Caco-2 (cell line): ENCODE measurements at regions of chr10 and their contacts with region 1.

Region 1: GRCh38 chr10:93006435-93007039 is 54.1 kb upstream of the CYP26C1 start:
- DNase-seq: peak in 1 of 2 experiments; percentile 53
- H3K4me3 ChIP-seq: no peak overlapping the region
- H3K4me3 Mint-ChIP-seq: no peak overlapping the region
- H3K27ac Mint-ChIP-seq: no peak overlapping the region
- H3K4me1 ChIP-seq: no peaks in the 10 kb centered on the region
- H3K4me1 Mint-ChIP-seq: no peaks in the 10 kb centered on the region
- H3K27me3 ChIP-seq: no peaks in the 10 kb centered on the region
- H3K27me3 Mint-ChIP-seq: no peaks in the 10 kb centered on the region
- CTCF ChIP-seq: peak; percentile 64 to 72

Region 2: DNA sequence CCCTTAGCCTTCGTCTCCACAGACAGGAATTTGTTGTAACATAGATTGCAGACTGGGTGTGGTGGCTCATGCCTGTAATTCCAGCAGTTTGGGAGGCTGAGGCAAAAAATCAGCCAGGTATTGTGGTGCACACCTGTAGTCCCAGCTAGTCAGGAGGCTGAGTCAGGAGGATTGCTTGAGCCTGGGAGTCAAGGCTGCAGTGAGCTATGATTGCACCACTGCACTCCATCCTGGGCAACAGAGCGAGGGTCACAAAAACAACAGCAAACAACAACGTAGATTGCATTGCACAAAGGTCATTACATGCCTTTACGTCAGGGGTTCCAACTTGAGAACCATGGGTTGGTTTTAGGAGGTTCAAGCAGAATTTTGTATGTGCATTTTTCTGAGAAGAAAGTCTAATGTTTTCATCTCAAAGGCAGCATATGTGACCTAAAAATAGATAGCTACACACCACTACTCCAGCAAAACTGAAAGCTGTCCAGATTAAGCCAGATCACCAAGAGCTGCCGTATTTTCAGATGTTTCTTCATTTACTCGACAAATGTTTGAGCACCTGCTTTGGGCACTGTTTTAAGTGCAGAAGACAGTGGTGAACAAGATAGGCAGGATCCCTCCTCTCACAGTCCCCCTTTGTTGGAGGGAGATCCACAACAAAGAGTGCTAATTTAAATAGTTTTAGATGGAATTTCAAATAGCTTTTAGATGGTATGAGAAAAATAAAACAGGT is 25.7 kb after region 1 on chr10:
- CTCF ChIA-PET with region 1: interaction called, 11 read pairs
- POLR2A ChIA-PET with region 1: no interaction called
- intact Hi-C with region 1: no loop called
- DNase-seq: no peak
- H3K4me3 ChIP-seq: no peak overlapping the region
- H3K4me3 Mint-ChIP-seq: no peak overlapping the region
- H3K27ac Mint-ChIP-seq: no peak overlapping the region
- H3K4me1 ChIP-seq: peaks cover 11% of the 10 kb centered on the region; the same call in 1 of the 2 replicates
- H3K4me1 Mint-ChIP-seq: peaks cover 8% of the 10 kb centered on the region
- H3K27me3 ChIP-seq: no peaks in the 10 kb centered on the region
- H3K27me3 Mint-ChIP-seq: no peaks in the 10 kb centered on the region
- CTCF ChIP-seq: no peak

Region 3: GRCh38 chr10:93039721-93040120 is 33.2 kb after region 1 on chr10:
- CTCF ChIA-PET with region 1: interaction called, 6 read pairs
- POLR2A ChIA-PET with region 1: no interaction called
- intact Hi-C with region 1: loop called (anchors 1 kb)
- DNase-seq: peak in 1 of 2 experiments; percentile 45
- H3K4me3 ChIP-seq: no peak overlapping the region
- H3K4me3 Mint-ChIP-seq: no peak overlapping the region
- H3K27ac Mint-ChIP-seq: no peak overlapping the region
- H3K4me1 ChIP-seq: no peaks in the 10 kb centered on the region
- H3K4me1 Mint-ChIP-seq: no peaks in the 10 kb centered on the region
- H3K27me3 ChIP-seq: no peaks in the 10 kb centered on the region
- H3K27me3 Mint-ChIP-seq: no peaks in the 10 kb centered on the region
- CTCF ChIP-seq: peak; percentile 32 to 59

Region 4: DNA sequence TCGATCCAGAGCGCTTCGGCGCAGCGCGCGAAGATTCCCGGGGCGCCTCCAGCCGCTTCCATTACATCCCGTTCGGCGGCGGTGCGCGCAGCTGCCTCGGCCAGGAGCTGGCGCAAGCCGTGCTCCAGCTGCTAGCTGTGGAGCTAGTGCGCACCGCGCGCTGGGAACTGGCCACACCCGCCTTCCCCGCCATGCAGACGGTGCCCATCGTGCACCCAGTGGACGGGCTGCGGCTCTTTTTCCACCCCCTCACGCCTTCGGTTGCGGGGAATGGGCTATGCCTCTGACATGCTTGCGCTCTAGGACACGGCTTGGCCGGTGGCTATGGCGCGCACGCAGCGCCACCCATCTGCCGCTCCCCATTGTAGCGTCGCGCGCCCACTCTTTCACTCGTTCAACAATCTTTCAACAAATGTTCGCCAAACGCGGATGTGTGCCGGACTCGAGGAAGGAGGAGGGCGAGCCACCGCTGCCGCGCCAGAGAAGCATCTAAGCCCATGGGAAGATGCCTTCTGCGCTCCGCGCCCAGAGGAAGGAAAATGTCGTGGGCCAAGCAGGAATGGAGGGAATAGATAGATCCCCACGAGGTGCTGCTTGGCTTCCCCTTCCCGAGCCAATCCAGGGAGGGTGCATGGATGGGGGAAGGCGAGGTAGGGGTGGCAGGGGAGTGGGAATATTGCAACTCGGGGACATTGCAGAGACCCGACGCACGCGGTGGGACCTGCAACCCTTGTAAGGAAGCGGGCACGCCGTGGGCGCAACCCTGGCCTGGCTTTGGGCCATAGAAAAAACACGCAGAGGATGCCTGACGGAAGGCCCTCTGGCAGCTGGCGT is 62.1 kb after region 1 on chr10:
- CTCF ChIA-PET with region 1: interaction called, 4 read pairs
- POLR2A ChIA-PET with region 1: no interaction called
- intact Hi-C with region 1: loop called (anchors 5 kb)
- DNase-seq: peak in 1 of 2 experiments; percentile 57
- H3K4me3 ChIP-seq: peak overlapping the region; percentile 30
- H3K4me3 Mint-ChIP-seq: peak overlapping the region; percentile 63
- H3K27ac Mint-ChIP-seq: no peak overlapping the region
- H3K4me1 ChIP-seq: peaks cover 11% of the 10 kb centered on the region
- H3K4me1 Mint-ChIP-seq: no peaks in the 10 kb centered on the region
- H3K27me3 ChIP-seq: peaks cover 5% of the 10 kb centered on the region; the same call in 1 of the 2 replicates
- H3K27me3 Mint-ChIP-seq: peaks cover 14% of the 10 kb centered on the region
- CTCF ChIP-seq: no peak

Region 5: DNA sequence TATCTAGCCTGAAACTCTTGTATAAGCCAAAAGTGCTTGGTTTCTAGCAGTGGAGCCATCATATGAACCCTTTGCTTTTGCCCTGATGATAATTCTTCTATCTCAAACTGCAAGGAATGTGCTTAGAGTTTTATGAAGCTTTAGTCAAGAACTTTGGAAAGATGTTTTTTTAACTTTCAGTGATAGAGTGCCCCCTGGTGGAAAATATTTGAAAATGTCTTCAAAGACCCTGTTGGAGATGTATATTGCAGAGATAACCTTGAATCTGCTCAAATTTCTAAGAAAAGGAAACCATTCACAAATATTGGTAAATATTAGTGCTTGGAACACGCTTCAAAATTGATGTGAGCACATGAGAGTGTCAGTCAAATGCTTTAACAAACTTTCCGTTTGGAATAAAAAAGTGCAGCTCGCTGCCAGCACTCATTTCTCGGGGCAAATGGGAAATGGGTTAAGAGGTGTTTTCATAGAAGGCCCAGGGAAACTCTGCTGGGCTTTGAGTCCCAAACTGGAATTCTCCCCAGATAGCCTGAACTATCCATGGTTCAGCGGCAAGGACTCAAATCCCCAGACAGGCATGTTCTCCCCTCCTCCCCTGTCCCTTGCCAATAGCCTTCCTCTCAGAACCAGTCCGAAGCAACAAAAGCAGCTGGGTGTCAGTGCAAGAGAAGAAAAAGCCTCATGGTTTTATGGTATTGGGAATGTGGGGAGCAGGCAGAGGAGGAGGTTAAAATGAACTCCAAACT is 346.3 kb after region 1 on chr10:
- CTCF ChIA-PET with region 1: no interaction called
- POLR2A ChIA-PET with region 1: no interaction called
- intact Hi-C with region 1: loop called (anchors 1 kb)
- DNase-seq: peak in 1 of 2 experiments; percentile 58
- H3K4me3 ChIP-seq: no peak overlapping the region
- H3K4me3 Mint-ChIP-seq: no peak overlapping the region
- H3K27ac Mint-ChIP-seq: no peak overlapping the region
- H3K4me1 ChIP-seq: peaks cover 3% of the 10 kb centered on the region; the same call in 1 of the 2 replicates
- H3K4me1 Mint-ChIP-seq: peaks cover 4% of the 10 kb centered on the region
- H3K27me3 ChIP-seq: no peaks in the 10 kb centered on the region
- H3K27me3 Mint-ChIP-seq: no peaks in the 10 kb centered on the region
- CTCF ChIP-seq: peak; percentile 42 to 61